PC-3 (cell line): ENCODE measurements at regions of chr3 and their contacts with region 1.

Region 1: GRCh38 chr3:155995525-155996351 is 124.6 kb upstream of the KCNAB1 start:
- DNase-seq: peak; percentile 67
- ATAC-seq: peak; percentile 97
- H3K4me3 ChIP-seq: no peak overlapping the region
- H3K27ac ChIP-seq: no peak overlapping the region
- H3K4me1 ChIP-seq: no peaks in the 10 kb centered on the region
- H3K27me3 ChIP-seq: no peaks in the 10 kb centered on the region
- CTCF ChIP-seq: peak; percentile 70

Region 2: DNA sequence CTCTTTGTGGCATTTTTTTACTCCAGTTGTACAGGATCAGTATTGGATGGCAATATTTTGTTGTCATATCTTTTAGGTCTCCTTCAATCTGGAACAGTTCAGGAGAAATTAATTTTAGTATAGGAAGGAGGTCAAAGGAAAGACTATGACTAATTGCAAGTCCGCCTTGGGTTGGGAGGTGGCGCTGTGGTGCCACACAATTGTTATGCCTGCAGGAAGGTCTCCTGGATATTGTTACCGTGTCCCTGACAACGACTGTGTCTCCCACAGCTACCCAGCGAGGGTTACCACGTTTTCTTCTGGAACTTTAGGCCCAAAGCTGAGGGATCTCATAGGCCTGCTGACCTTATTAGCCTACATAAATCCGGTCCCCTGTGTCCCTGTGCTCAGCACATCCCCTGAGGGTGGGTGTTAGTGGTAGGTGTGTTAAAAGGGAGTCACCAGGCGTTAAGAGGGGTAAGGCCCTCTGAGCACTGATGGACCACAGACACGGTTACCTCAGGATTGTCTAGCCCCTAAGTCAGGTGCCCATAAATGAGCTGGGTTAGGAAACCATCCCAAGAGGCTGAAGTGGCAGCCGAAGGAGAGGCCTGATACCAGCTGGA is 156.2 kb after region 1 on chr3:
- CTCF ChIA-PET with region 1: interaction called, 3 read pairs
- POLR2A ChIA-PET with region 1: no interaction called
- intact Hi-C with region 1: loop called (anchors 2 kb)
- DNase-seq: peak; percentile 80
- ATAC-seq: peak; percentile 80
- H3K4me3 ChIP-seq: no peak overlapping the region
- H3K27ac ChIP-seq: no peak overlapping the region
- H3K4me1 ChIP-seq: no peaks in the 10 kb centered on the region
- H3K27me3 ChIP-seq: no peaks in the 10 kb centered on the region
- CTCF ChIP-seq: peak; percentile 88